CD4-positive, alpha-beta memory T cell (primary cell): ENCODE measurements at regions of chr15 and their contacts with region 1.

Region 1: DNA sequence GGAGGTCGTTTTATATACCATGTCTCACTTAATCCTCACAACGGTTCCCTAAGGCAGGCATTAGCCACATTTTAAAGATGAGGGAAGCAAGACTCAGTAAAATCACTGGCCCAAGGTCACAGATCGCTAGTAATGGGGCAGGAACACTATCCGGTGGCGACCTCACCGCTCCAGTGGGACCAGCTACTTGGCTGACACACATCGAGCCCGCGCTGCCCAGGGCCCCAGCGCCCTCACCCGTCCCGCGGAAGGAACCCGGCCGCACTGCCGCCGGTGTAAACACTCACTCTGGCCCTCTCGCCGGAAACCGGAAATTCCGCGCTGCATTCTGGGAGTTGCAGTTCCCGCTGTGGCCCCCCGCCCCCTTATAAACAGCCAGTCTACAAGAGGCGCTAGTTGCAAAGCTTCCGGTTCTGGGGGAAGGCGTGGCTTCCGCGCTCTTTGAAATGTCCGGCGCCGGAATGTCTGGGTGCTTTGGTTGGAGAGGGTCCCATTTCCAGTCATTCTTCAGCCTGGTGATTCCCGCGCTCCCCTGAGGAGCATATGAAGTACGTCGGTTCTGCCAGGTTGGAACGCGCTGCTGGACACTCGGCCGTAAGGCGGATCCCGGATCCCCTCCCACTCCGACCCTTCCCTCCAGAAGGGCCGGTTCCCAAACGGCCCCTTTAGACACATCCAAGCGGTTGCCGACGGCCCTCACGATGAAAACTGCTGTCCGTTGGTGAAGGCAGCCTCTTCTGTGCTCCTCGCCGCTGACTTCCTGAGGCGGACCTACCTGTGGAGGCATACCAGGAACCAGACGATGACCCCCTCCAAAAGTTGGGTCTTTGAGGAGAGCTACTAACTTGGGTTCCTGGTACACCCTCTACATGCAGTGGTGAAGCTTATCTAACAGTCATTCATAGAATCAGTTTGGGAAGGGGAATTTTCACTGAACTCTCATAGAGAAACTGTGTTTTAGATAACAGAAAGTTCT is at the start of gene UBL7:
- DNase-seq: peak; percentile 89 to 97 (median 91)
- H3K4me3 ChIP-seq: peak within 1 kb of the TSS; percentile 78 to 100
- H3K4me3 Mint-ChIP-seq: peak within 1 kb of the TSS; percentile 88 to 98 (median 94)
- H3K27ac ChIP-seq: peak within 1 kb of the TSS; percentile 84
- H3K27ac Mint-ChIP-seq: peak within 1 kb of the TSS; percentile 66 to 96 (median 92)
- H3K4me1 ChIP-seq: peaks cover 40% of the 10 kb centered on the region
- H3K4me1 Mint-ChIP-seq: peaks cover 32 to 53% (median 46%) of the 10 kb centered on the region in 4 donors
- H3K27me3 ChIP-seq: no peaks in the 10 kb centered on the region
- H3K27me3 Mint-ChIP-seq: no peaks in the 10 kb centered on the region
- total RNA-seq, gene UBL7: 36.4 to 42.4 TPM

Region 2: DNA sequence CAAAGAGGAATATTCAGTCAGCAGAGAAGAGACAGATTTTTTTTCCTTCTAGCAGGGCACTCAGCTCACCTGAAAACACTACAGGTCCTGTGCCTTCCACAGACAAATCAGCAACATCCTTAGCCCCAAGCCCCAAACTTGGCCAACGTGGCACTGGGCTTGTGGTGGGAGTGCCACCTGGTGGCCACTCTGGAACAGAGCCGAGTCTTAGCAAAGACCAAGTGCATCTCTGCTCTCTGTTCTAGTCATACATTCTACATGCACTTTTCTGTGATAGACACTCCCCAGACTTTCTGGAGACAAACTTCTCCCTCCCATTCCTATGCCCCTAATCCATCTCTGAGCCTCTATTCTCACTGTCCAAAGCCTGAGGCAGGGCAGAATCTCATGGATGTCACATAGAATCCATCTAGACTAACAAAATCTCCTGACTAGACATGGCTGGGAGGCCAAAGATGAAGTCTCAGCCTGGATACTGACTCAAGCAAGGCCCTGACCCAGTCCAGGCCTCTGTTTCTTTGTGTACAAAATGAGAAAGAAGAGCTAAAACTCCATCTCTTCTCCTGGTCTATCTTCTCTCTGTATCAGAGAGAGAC is 22.3 kb before region 1 on chr15:
- CTCF ChIA-PET with region 1: interaction called, 4 read pairs
- POLR2A ChIA-PET with region 1: interaction called, 3 read pairs
- intact Hi-C with region 1: loop called (anchors 2 kb)
- DNase-seq: peak; percentile 61 to 71 (median 66)
- H3K4me3 ChIP-seq: no peak overlapping the region
- H3K4me3 Mint-ChIP-seq: peak overlapping the region in 1 of 8 donors; percentile 44
- H3K27ac ChIP-seq: no peak overlapping the region
- H3K27ac Mint-ChIP-seq: peak overlapping the region in 1 of 7 donors; percentile 9
- H3K4me1 ChIP-seq: peaks cover 11% of the 10 kb centered on the region
- H3K4me1 Mint-ChIP-seq: peaks cover 4 to 17% (median 11%) of the 10 kb centered on the region in 4 donors
- H3K27me3 ChIP-seq: no peaks in the 10 kb centered on the region
- H3K27me3 Mint-ChIP-seq: no peaks in the 10 kb centered on the region

Region 3: DNA sequence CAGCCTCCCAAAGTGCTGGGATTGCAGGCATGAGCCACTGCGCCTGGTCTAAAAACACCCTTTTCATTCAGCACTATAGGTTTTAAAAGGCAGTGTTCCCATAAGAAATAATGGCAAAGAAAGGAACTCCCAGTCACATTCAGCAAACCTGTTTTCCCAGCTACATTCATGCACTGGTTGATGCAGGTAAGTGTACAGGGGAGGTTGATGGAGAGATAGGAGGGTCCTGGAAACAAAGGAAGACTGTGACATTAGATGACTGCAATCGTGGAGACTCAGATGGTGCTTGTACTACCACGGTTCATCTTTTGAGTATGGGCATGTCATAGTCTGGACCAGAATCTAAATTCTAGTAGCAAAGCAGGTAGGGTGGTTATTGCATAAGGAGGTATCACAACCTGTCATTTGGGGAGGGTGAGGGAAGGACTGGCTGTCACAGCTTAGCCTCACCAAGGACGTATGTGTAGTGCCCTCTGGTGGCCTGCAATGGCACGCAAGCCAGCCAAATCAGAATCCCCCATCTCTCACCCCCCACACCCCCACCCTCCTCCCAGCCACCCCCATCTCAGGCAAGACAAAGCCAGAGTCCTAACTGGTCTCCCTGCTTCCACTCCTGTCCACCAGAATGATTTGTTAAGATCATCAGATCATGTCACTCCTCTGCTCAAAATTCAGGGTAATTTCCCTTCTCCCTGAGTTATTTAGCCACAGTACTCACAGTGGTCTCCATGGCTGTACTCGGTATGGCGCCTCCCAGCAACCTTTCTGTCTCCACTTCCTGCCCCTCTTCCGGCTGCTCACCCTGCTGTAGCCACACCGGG is 28.6 kb after region 1 on chr15:
- CTCF ChIA-PET with region 1: interaction called, 5 read pairs
- POLR2A ChIA-PET with region 1: no interaction called
- intact Hi-C with region 1: loop called (anchors 1 kb)
- DNase-seq: peak; percentile 49 to 69 (median 54)
- H3K4me3 ChIP-seq: no peak overlapping the region
- H3K4me3 Mint-ChIP-seq: peak overlapping the region in 1 of 8 donors; percentile 20
- H3K27ac ChIP-seq: no peak overlapping the region
- H3K27ac Mint-ChIP-seq: peak overlapping the region in 1 of 7 donors; percentile 39
- H3K4me1 ChIP-seq: peaks cover 10% of the 10 kb centered on the region
- H3K4me1 Mint-ChIP-seq: peaks cover 9 to 12% (median 10%) of the 10 kb centered on the region in 4 donors
- H3K27me3 ChIP-seq: no peaks in the 10 kb centered on the region
- H3K27me3 Mint-ChIP-seq: no peaks in the 10 kb centered on the region

Region 4: GRCh38 chr15:74540761-74541493 is 79.8 kb after region 1 on chr15 and contains the start of gene ARID3B:
- CTCF ChIA-PET with region 1: interaction called, 3 read pairs
- POLR2A ChIA-PET with region 1: interaction called, 27 read pairs
- intact Hi-C with region 1: loop called (anchors 1 kb)
- DNase-seq: peak; percentile 89 to 96 (median 93)
- H3K4me3 ChIP-seq: peak within 1 kb of the TSS; percentile 64 to 79
- H3K4me3 Mint-ChIP-seq: peak within 1 kb of the TSS; percentile 94 to 100 (median 98)
- H3K27ac ChIP-seq: peak within 1 kb of the TSS; percentile 77
- H3K27ac Mint-ChIP-seq: peak within 1 kb of the TSS; percentile 87 to 99 (median 95)
- H3K4me1 ChIP-seq: peaks cover 39% of the 10 kb centered on the region
- H3K4me1 Mint-ChIP-seq: peaks cover 37 to 62% (median 51%) of the 10 kb centered on the region in 4 donors
- H3K27me3 ChIP-seq: no peaks in the 10 kb centered on the region
- H3K27me3 Mint-ChIP-seq: no peaks in the 10 kb centered on the region
- total RNA-seq, gene ARID3B: 32.9 TPM